Cardiac septum (tissue), 1 donor: ENCODE measurements at regions of chr7 and their contacts with region 1.

Region 1: DNA sequence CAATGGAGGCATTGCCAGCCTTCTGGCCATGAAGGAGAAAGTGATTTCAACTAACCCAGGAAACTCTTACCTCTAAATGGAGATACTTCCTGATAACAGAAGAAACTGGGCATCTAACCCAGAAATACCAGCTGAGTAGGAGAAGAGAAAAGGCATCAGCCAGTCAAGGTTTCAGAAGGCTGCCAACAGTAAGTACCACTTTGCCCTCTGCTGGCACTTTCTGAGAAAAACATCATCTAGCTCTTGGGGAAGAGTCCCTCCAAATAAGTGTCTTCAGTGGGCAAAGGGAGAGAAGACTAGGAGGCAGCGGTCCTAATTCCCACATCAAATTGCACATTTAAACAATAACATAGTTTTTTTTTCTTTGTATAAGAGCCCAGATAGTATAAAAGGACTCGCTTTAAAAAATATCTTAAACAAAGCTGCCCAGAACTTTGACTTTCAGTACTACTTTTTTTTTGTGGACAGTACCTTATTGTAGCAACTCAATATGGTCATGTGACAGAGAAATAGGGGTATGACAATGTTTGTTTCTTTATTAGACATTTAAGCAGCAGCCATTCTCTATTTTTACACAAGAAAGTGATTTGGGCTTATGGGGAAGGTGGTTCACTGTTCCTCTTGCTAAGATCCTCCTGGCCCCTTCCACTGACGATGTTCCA is 157.3 kb downstream of the CTTNBP2 start:
- DNase-seq: no peak

Region 2: GRCh38 chr7:117458977-117459583 is 256.8 kb before region 1 on chr7:
- intact Hi-C with region 1: loop called (anchors 10 kb)
- DNase-seq: no peak